Endothelial cell of umbilical vein (primary cell): ENCODE measurements at regions of chr22 and their contacts with region 1.

Region 1: DNA sequence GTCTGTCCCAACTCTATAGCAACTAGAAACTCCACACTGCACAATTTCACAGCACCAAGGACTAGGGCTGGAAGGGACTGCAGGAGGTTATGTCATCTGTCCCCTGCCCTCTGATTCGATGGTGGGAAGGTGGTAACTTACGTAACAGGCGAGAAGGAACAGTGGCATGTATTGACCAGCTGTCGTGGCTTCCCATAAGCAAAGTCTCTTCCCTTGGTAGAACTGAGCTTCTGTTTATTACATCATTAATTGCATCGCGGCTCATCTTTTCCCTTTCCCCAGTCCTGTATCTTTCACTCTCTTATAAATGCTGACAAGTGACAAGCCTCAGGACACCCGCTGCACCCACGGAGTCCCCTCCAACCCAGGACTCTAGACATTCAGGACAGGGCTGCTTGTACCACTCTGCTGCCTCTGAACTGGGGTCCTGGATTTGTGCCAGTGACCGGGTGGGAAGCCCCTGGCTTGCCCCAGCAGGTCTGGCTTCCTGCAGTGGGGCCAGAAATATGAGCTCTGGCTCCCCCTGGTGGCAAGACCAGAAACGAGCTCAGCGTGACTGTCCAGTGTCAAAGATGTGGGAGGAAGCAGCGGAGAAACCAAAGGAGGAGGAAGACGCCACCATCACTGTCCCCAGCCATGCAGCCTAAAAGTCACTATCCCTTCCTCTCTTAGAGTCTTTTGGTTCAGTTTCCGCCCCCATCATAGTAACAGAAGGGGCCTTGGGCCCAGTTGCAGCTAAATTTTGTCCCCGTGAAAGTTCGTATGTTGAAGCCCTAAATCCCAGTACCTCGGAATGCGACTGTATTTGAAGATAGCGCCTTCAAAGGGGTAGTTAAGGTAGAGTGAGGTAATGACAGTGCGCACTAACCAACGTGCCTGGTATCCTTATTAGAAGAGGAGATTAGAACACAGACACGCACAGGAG is 84.5 kb downstream of the ISX start:
- DNase-seq: peak; percentile 40
- H3K4me3 ChIP-seq: no peak overlapping the region
- H3K27ac ChIP-seq: no peak overlapping the region
- H3K4me1 ChIP-seq: no peaks in the 10 kb centered on the region
- H3K27me3 ChIP-seq: no peaks in the 10 kb centered on the region
- CTCF ChIP-seq: peak; percentile 76 to 81
- POLR2A ChIP-seq: no peak

Region 2: DNA sequence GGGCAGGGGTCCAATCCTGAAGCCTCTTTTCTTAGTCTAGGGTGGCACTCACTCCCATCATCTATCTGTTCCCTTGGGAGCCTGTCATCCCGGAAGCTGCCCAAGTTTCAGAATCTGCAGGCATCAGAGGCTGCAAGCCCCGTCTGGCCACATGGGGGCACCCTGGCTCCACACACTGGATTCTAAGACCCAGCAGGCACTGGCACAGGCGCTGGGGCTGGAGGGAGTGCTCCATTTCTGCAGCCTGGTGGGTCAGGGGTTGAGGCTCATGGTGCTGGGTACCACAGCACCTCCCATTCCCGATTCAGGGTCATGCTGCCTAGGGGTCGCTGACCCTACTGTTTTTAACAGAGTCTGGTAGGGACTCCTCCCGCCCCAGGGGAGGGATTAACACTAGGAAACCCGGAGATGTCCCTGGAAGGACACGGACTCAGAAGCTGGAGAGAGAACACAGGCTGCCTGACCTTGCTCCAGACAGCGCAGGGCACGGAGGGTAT is 1848.3 kb before region 1 on chr22:
- CTCF ChIA-PET with region 1: interaction called, 10 read pairs
- POLR2A ChIA-PET with region 1: no interaction called
- dilution Hi-C with region 1: no loop called
- intact Hi-C with region 1: loop called (anchors 1 kb)
- DNase-seq: peak; percentile 5
- H3K4me3 ChIP-seq: no peak overlapping the region
- H3K27ac ChIP-seq: no peak overlapping the region
- H3K4me1 ChIP-seq: no peaks in the 10 kb centered on the region
- H3K27me3 ChIP-seq: no peaks in the 10 kb centered on the region
- CTCF ChIP-seq: peak; percentile 68 to 74
- POLR2A ChIP-seq: no peak

Region 3: GRCh38 chr22:33920927-33921524 is 1229.4 kb before region 1 on chr22:
- CTCF ChIA-PET with region 1: interaction called, 8 read pairs
- POLR2A ChIA-PET with region 1: no interaction called
- dilution Hi-C with region 1: no loop called
- intact Hi-C with region 1: loop called (anchors 1 kb)
- DNase-seq: peak; percentile 84
- H3K4me3 ChIP-seq: peak overlapping the region in 2 of 3 experiments; percentile 33 to 46
- H3K27ac ChIP-seq: no peak overlapping the region
- H3K4me1 ChIP-seq: peaks cover 4% of the 10 kb centered on the region
- H3K27me3 ChIP-seq: peaks cover 26 to 29% of the 10 kb centered on the region in 2 experiments
- CTCF ChIP-seq: no peak
- POLR2A ChIP-seq: no peak

Region 4: DNA sequence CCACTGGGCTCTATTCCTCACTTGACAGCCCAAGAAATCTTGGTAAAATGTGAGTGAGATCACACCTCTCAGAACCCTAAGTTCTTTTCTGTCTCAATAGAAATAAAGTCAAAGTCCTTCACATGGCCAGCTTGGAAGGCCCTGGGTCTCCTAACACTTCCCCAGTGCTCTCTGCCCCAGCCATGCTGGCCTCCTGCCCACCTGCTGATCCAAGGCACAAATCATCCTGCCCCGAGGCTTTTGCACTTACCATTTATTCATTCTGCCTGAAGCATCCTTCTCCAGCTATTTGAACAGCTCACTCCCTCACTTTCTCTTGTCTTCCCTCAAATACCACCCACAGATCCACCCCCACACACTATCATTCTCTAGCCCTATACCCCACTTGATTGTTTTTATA is 58.0 kb before region 1 on chr22:
- CTCF ChIA-PET with region 1: no interaction called
- POLR2A ChIA-PET with region 1: no interaction called
- dilution Hi-C with region 1: no loop called
- intact Hi-C with region 1: no loop called
- DNase-seq: no peak
- H3K4me3 ChIP-seq: no peak overlapping the region
- H3K27ac ChIP-seq: no peak overlapping the region
- H3K4me1 ChIP-seq: no peaks in the 10 kb centered on the region
- H3K27me3 ChIP-seq: no peaks in the 10 kb centered on the region
- CTCF ChIP-seq: no peak
- POLR2A ChIP-seq: no peak

Region 5: GRCh38 chr22:35131525-35132000 is 18.9 kb before region 1 on chr22:
- CTCF ChIA-PET with region 1: interaction called, 12 read pairs
- POLR2A ChIA-PET with region 1: no interaction called
- dilution Hi-C with region 1: no loop called
- intact Hi-C with region 1: no loop called
- DNase-seq: no peak
- H3K4me3 ChIP-seq: no peak overlapping the region
- H3K27ac ChIP-seq: no peak overlapping the region
- H3K4me1 ChIP-seq: no peaks in the 10 kb centered on the region
- H3K27me3 ChIP-seq: no peaks in the 10 kb centered on the region
- CTCF ChIP-seq: no peak
- POLR2A ChIP-seq: no peak

Region 6: DNA sequence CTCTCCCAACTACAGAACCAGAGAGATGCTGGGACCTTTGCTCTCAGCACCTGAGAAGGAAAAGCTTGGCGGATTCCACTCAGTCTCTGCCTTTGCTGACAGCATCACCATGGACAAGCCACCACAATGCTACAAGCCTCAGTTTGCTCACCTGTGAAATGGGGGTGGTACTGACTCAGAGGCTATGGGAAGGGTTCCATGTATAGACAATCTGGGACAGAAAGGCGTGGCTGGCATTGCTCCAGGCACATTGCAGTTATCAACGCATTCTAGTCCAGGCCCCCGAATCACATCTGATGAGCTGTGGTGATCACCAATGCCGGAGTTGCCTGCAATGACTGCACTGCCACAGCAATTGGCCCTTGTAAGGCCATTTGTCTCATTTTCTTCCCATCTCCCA is 11.9 kb before region 1 on chr22:
- CTCF ChIA-PET with region 1: interaction called, 10 read pairs
- POLR2A ChIA-PET with region 1: no interaction called
- dilution Hi-C with region 1: no loop called
- intact Hi-C with region 1: no loop called
- DNase-seq: no peak
- H3K4me3 ChIP-seq: no peak overlapping the region
- H3K27ac ChIP-seq: no peak overlapping the region
- H3K4me1 ChIP-seq: no peaks in the 10 kb centered on the region
- H3K27me3 ChIP-seq: no peaks in the 10 kb centered on the region
- CTCF ChIP-seq: no peak
- POLR2A ChIP-seq: no peak

Region 7: DNA sequence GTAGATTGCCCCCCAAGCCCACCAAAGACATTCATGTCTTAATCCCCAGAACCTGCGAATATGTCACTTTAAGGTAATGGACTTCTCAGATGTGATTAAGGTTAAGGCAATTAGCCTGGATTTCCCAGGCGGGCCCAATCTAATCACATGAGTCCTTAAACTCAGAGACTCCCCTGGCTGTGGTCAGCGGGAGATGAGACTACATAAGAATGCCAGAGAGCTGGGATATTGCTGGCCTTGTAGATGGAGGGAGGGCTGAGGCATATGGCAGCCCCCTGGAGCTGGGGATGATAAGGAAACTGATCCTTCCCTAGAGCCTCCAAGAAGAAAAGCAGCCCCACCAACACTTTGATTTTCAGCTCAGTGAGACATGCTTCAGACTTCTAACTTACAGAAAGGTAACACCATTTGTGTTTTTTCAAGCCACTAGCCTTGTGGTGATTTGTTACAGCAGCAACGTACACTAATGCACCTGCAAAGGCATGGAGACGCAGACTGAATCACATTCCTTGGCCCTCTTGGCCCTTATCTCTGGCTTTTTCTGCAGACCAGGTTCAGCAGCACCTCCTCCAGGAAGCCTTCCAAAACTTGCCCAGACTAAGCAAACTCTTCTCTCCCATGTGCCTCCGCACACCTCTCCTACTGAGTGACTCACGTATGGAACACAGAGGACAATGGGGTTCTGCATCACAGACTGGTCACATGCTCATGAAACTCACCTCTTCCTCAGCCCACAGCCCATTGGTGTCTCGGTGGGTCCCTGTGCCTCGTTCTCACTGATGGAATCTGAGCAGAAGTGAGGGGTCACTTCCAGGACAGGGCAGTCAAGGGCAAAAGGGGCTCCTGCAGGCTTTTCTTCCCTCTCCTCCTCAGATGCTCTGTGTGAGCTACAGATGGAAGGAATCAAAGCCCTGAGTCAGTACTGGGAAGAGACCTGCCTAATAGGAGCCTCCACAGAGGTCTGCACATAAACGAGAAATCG is 20.6 kb after region 1 on chr22:
- CTCF ChIA-PET with region 1: interaction called, 11 read pairs
- POLR2A ChIA-PET with region 1: no interaction called
- dilution Hi-C with region 1: no loop called
- intact Hi-C with region 1: no loop called
- DNase-seq: no peak
- H3K4me3 ChIP-seq: no peak overlapping the region
- H3K27ac ChIP-seq: no peak overlapping the region
- H3K4me1 ChIP-seq: no peaks in the 10 kb centered on the region
- H3K27me3 ChIP-seq: peaks cover 0 to 1% of the 10 kb centered on the region in 2 experiments
- CTCF ChIP-seq: no peak
- POLR2A ChIP-seq: no peak

Region 8: DNA sequence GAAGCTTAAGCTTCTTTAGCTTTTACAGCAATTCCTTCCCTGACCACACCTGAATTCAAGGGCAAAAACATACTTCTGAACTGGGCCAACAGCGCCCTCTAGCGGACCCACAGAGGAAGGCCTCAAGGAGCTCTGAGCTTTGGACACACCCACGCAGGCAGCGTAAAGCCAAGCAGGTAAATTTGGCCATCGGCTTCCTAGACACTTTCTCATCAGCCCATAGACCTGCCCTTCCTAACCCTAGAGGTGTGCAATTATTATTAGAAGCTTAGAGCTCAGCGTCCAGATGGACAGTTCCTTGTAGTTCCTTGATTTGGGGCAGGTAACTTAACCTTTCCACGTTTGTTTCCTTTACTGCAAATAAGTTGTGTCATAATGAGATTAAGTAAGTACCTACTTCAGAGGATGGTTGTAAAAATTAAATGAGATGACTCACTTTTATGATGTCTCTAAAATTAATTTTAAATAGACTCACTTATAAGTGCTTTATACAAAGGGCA is 81.2 kb after region 1 on chr22:
- CTCF ChIA-PET with region 1: interaction called, 41 read pairs
- POLR2A ChIA-PET with region 1: no interaction called
- dilution Hi-C with region 1: no loop called
- intact Hi-C with region 1: loop called (anchors 1 kb)
- DNase-seq: peak; percentile 61
- H3K4me3 ChIP-seq: no peak overlapping the region
- H3K27ac ChIP-seq: no peak overlapping the region
- H3K4me1 ChIP-seq: no peaks in the 10 kb centered on the region
- H3K27me3 ChIP-seq: peaks cover 2 to 6% of the 10 kb centered on the region in 2 experiments
- CTCF ChIP-seq: peak; percentile 93 to 94
- POLR2A ChIP-seq: no peak